Dendritic cell treated with granulocyte-macrophage colony-stimulating factor and Interleukin-4, amounts not matched to agents 40 ng/mL and 50 ng/mL, for 4 days (primary cell): ENCODE measurements at regions of chr15 and their contacts with region 1.

Region 1: GRCh38 chr15:51861557-51862359 is 32.3 kb downstream of the TMOD3 start:
- H3K4me3 Mint-ChIP-seq: no peak overlapping the region
- H3K27ac Mint-ChIP-seq: no peak overlapping the region
- H3K4me1 Mint-ChIP-seq: peaks cover 26% of the 10 kb centered on the region
- H3K27me3 Mint-ChIP-seq: no peaks in the 10 kb centered on the region

Region 2: DNA sequence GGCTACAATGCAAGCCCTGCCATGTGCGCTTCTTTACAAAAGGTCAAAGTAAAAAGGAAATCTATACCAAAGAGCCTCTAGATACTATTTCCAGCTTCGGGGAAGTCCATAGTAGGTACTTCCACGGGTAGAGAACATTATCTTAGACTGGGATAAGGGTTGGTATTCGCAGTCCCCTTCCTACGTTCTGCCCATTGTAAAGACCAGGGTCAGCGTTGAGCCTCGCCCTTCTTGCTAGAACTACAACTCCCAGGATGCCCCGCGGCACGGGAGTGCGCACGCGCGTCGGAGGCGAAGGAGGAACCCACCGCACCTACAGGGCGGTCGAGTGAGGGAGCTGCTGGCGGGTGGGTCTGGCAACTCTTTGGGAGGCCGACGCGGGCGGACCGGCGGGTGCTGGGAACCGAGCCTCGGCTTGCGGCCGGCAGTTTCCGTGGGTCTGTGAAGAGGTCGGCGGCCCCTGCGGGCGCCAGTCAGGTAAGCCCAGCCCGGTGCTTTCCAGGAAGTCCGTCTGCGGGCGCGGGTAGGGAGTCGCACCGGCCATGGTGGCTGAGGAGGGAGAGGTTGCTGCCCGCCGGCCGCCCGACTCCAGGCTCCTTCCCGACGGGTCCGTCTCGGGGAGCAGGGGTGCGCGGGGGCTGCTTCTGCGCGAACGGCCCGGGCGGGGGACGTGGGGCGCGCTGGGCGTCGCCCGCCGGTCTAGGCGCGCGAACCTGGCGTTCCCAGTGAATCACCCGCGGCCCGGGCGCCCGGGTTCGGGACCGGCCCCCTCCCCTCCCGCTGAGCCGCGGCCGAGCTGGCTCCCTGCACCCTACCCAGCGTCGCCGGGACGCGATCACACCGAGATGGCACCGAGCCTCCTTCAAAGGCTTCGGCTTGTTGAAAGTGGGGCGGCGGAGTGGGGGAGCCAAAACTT is 32.1 kb before region 1 on chr15 and contains the start of gene TMOD3:
- intact Hi-C with region 1: loop called (anchors 5 kb)
- H3K4me3 Mint-ChIP-seq: peak within 1 kb of the TSS; percentile 97
- H3K27ac Mint-ChIP-seq: peak within 1 kb of the TSS; percentile 95
- H3K4me1 Mint-ChIP-seq: peaks cover 36% of the 10 kb centered on the region
- H3K27me3 Mint-ChIP-seq: no peaks in the 10 kb centered on the region